Endothelial cell of umbilical vein (primary cell): ENCODE measurements at regions of chr5 and their contacts with region 1.

Region 1: DNA sequence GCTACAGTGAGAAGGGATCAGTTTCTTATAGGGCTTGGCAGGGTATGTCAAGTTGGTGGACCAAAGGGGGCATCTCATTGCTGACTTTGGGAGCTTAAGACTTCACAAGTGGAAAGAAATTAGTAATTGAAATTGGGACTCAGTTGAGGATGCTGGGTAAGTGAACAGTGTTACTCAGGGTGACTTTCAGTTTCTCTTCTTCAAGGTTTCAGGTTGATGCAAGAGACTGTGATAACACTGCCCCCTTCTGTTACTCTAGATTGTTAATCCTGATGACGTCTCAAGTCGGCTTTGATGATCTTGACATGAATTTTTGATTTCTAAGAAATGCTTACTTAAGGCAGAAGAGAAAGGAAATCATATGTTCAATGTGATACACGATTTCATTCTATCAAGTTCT is 21.3 kb downstream of the KCTD16 start:
- DNase-seq: peak; percentile 88
- H3K4me3 ChIP-seq: no peak overlapping the region
- H3K27ac ChIP-seq: peak overlapping the region; percentile 88
- H3K4me1 ChIP-seq: peaks cover 44% of the 10 kb centered on the region
- H3K27me3 ChIP-seq: no peaks in the 10 kb centered on the region
- CTCF ChIP-seq: peak; percentile 43 to 60
- POLR2A ChIP-seq: no peak

Region 2: GRCh38 chr5:142977363-142978051 is 1214.5 kb before region 1 on chr5:
- CTCF ChIA-PET with region 1: no interaction called
- POLR2A ChIA-PET with region 1: no interaction called
- dilution Hi-C with region 1: no loop called
- intact Hi-C with region 1: no loop called
- DNase-seq: peak; percentile 48
- H3K4me3 ChIP-seq: no peak overlapping the region
- H3K27ac ChIP-seq: peak overlapping the region; percentile 58
- H3K4me1 ChIP-seq: peaks cover 54% of the 10 kb centered on the region
- H3K27me3 ChIP-seq: no peaks in the 10 kb centered on the region
- CTCF ChIP-seq: no peak
- POLR2A ChIP-seq: no peak

Region 3: DNA sequence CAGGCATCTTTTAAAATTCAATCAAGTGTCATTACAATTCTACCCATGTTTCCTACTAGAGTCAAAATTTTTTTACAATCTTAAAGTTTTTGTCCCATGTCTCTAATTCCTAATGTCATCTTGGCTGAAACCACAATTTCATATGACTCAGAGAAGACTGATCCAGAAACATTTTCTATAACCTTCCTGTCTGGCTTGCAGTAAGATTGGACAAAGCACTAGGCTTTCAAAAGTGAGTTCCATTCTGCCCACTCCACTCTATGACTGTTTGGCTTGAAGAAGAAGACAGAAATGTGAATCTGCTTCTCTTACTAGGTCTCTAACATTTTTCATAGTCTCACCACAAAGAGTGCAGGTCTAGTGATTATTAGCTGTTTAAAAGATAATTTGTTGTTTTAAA is 877.3 kb before region 1 on chr5:
- CTCF ChIA-PET with region 1: interaction called, 3 read pairs
- POLR2A ChIA-PET with region 1: no interaction called
- dilution Hi-C with region 1: no loop called
- intact Hi-C with region 1: loop called (anchors 5 kb)
- DNase-seq: peak; percentile 69
- H3K4me3 ChIP-seq: no peak overlapping the region
- H3K27ac ChIP-seq: peak overlapping the region; percentile 24
- H3K4me1 ChIP-seq: peaks cover 62% of the 10 kb centered on the region
- H3K27me3 ChIP-seq: no peaks in the 10 kb centered on the region
- CTCF ChIP-seq: no peak
- POLR2A ChIP-seq: no peak

Region 4: DNA sequence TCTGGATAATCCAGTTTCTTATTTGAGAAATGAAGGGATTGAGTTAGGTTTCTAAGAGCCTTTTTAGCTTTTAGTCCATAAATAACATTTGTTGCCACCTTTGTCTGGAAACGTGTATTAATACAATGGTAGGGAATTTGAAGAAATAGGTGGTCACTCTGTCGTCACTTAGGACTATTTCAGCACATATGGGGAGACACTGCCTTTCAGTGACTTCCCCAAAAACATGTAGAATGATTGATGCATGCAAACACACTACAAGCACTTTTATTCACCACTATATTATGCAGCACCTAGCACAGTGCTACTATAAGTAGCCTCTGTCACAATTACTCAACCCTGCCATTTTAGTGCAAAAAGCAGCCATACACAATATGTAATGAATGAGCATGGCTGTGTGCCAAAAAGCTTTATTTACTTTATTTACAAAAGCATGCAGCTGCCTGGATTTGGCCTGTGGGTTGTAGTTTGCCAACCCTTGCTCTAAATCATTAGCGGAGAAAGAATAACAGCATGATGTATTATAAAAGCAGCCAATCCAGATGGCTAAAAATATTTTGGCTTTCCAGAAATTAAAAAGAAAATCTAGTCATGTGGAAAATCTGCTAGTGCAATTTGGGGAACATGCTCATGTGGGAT is 534.2 kb before region 1 on chr5:
- CTCF ChIA-PET with region 1: no interaction called
- POLR2A ChIA-PET with region 1: no interaction called
- dilution Hi-C with region 1: no loop called
- intact Hi-C with region 1: loop called (anchors 10 kb)
- DNase-seq: peak; percentile 4
- H3K4me3 ChIP-seq: no peak overlapping the region
- H3K27ac ChIP-seq: no peak overlapping the region
- H3K4me1 ChIP-seq: no peaks in the 10 kb centered on the region
- H3K27me3 ChIP-seq: peaks cover 0 to 4% of the 10 kb centered on the region in 2 experiments
- CTCF ChIP-seq: no peak
- POLR2A ChIP-seq: no peak

Region 5: DNA sequence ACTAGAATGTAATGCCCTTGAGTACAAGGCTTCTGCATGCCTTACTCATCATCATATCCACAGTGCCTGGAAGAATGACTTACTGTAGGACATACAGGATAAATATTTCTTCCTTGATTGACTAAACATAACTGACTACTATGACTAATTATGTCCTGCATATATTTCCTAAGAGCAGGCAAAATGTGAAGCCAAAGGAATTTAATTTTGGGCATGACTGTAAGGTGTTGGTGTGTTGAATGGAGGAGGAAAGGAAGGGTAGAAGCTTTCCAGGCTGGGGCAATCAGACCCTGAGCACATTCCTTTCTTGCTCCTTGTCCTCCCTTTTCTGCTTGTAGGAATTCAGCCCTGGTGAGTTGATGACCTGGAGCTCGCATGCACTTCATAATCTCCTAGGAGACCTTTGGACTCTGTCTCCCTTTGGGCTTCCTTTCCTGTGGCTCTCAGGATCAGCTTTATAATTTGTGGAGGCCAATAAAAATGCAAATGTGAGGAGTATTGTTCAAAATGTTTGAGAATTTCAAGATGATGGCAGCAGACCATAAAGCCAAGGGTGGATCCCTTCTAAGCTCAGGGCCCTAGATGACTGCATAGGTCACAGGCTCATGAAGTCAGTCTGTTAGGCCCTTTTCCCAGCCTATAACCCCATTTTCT is 206.0 kb before region 1 on chr5:
- CTCF ChIA-PET with region 1: no interaction called
- POLR2A ChIA-PET with region 1: no interaction called
- dilution Hi-C with region 1: no loop called
- intact Hi-C with region 1: loop called (anchors 5 kb)
- DNase-seq: peak; percentile 58
- H3K4me3 ChIP-seq: no peak overlapping the region
- H3K27ac ChIP-seq: peak overlapping the region; percentile 44
- H3K4me1 ChIP-seq: peaks cover 24% of the 10 kb centered on the region
- H3K27me3 ChIP-seq: no peaks in the 10 kb centered on the region
- CTCF ChIP-seq: no peak
- POLR2A ChIP-seq: no peak

Region 6: GRCh38 chr5:144318011-144318410 is 126.0 kb after region 1 on chr5:
- CTCF ChIA-PET with region 1: no interaction called
- POLR2A ChIA-PET with region 1: no interaction called
- dilution Hi-C with region 1: no loop called
- intact Hi-C with region 1: no loop called
- DNase-seq: no peak
- H3K4me3 ChIP-seq: no peak overlapping the region
- H3K27ac ChIP-seq: no peak overlapping the region
- H3K4me1 ChIP-seq: no peaks in the 10 kb centered on the region
- H3K27me3 ChIP-seq: no peaks in the 10 kb centered on the region
- CTCF ChIP-seq: no peak
- POLR2A ChIP-seq: no peak

Region 7: DNA sequence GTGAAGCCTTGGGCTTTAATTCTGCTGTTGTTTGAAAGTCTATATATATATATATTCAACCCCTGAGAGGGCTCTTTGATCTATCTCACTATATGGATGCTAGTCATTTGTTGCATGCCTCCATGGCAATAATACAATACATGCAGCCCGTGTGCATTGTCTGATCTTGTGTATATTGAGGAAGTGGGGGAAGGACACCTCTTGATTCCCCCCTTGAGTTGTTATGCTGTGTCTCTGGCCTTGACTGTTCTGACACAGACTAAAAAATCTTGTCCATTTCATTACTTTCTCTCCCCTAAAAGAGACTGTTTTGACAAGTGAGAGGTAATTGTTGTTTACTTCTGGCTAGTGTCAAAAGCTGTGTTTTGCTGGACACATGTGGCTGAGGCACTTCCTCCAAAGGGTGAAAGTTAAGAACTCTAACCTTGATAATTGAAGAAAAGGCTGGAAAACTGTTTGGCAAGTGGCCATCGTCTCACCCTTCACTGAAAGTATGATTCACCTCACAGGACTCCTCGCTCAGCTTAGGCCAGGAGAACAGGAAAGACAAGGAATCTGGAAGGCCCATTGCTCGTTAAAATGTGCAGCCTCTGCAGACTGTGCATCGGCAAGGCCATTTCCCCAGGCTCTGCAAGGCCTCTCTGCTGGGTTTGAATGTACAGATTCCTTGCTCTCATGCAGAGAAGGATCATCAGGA is 1339.2 kb after region 1 on chr5:
- CTCF ChIA-PET with region 1: no interaction called
- POLR2A ChIA-PET with region 1: no interaction called
- dilution Hi-C with region 1: no loop called
- intact Hi-C with region 1: loop called (anchors 5 kb)
- DNase-seq: peak; percentile 95
- H3K4me3 ChIP-seq: no peak overlapping the region
- H3K27ac ChIP-seq: no peak overlapping the region
- H3K4me1 ChIP-seq: peaks cover 16% of the 10 kb centered on the region
- H3K27me3 ChIP-seq: no peaks in the 10 kb centered on the region
- CTCF ChIP-seq: no peak
- POLR2A ChIP-seq: no peak